Activated B cell treated with CpG ODN at 0.5 μM for 24 hours (primary cell): ENCODE measurements at regions of chr3 and their contacts with region 1.

Region 1: DNA sequence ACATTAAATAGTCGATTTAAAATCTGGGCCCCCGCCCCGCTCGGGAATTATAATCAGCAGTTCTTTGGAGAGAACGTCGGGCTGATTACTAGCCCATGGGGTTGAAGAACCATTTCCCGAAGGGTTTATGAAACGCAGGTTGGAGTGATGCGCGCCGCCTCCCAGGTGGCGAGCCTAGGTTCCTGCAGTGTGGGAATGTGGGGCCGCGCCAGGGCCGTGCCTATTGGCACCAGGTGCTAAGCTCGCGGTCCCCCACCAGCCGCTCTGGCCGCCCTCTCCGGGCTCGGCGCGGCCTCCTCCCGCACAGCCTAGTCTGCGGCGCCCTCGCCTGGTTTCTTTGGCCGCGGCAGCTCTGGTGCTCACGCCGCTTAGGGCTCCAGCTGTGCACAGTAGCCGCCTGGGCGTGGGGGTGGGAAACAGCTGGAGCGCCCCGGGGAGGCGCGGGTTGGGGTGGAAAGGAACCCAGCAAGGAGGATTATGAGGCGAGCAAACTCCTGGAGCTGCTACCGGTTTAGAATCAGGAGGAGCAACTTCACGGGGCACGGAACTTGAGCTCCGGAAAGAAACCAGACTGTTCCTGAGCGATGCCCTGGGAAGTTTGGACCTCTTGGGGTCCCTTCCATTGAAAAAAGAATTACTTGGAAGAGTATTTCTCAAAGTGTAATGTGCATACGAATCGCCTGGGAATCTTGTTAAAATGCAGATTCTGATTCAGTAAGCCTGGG is 5.6 kb upstream of the MECOM start:
- DNase-seq: peak; percentile 53
- ATAC-seq: peak; percentile 81
- H3K4me3 Mint-ChIP-seq: peak overlapping the region; percentile 54
- H3K27ac Mint-ChIP-seq: no peak overlapping the region
- H3K4me1 Mint-ChIP-seq: peaks cover 21% of the 10 kb centered on the region
- H3K27me3 Mint-ChIP-seq: peaks cover 81% of the 10 kb centered on the region
- CTCF ChIP-seq: no peak

Region 2: GRCh38 chr3:168511428-168512014 is 1157.6 kb before region 1 on chr3:
- CTCF ChIA-PET with region 1: no interaction called
- POLR2A ChIA-PET with region 1: no interaction called
- intact Hi-C with region 1: loop called (anchors 10 kb)
- DNase-seq: no peak
- ATAC-seq: no peak
- H3K4me3 Mint-ChIP-seq: no peak overlapping the region
- H3K27ac Mint-ChIP-seq: no peak overlapping the region
- H3K4me1 Mint-ChIP-seq: no peaks in the 10 kb centered on the region
- H3K27me3 Mint-ChIP-seq: no peaks in the 10 kb centered on the region
- CTCF ChIP-seq: no peak

Region 3: GRCh38 chr3:169041677-169042171 is 627.4 kb before region 1 on chr3:
- CTCF ChIA-PET with region 1: no interaction called
- POLR2A ChIA-PET with region 1: no interaction called
- intact Hi-C with region 1: loop called (anchors 2 kb)
- DNase-seq: no peak
- ATAC-seq: no peak
- H3K4me3 Mint-ChIP-seq: no peak overlapping the region
- H3K27ac Mint-ChIP-seq: no peak overlapping the region
- H3K4me1 Mint-ChIP-seq: no peaks in the 10 kb centered on the region
- H3K27me3 Mint-ChIP-seq: no peaks in the 10 kb centered on the region
- CTCF ChIP-seq: no peak

Region 4: GRCh38 chr3:169218314-169218983 is 450.7 kb before region 1 on chr3:
- CTCF ChIA-PET with region 1: interaction called, 3 read pairs
- POLR2A ChIA-PET with region 1: no interaction called
- intact Hi-C with region 1: loop called (anchors 10 kb)
- DNase-seq: no peak
- ATAC-seq: no peak
- H3K4me3 Mint-ChIP-seq: no peak overlapping the region
- H3K27ac Mint-ChIP-seq: no peak overlapping the region
- H3K4me1 Mint-ChIP-seq: no peaks in the 10 kb centered on the region
- H3K27me3 Mint-ChIP-seq: no peaks in the 10 kb centered on the region
- CTCF ChIP-seq: no peak

Region 5: GRCh38 chr3:169541528-169541927 is 127.6 kb before region 1 on chr3:
- CTCF ChIA-PET with region 1: no interaction called
- POLR2A ChIA-PET with region 1: no interaction called
- intact Hi-C with region 1: no loop called
- DNase-seq: no peak
- ATAC-seq: no peak
- H3K4me3 Mint-ChIP-seq: no peak overlapping the region
- H3K27ac Mint-ChIP-seq: no peak overlapping the region
- H3K4me1 Mint-ChIP-seq: no peaks in the 10 kb centered on the region
- H3K27me3 Mint-ChIP-seq: peaks cover 3% of the 10 kb centered on the region
- CTCF ChIP-seq: no peak

Region 6: DNA sequence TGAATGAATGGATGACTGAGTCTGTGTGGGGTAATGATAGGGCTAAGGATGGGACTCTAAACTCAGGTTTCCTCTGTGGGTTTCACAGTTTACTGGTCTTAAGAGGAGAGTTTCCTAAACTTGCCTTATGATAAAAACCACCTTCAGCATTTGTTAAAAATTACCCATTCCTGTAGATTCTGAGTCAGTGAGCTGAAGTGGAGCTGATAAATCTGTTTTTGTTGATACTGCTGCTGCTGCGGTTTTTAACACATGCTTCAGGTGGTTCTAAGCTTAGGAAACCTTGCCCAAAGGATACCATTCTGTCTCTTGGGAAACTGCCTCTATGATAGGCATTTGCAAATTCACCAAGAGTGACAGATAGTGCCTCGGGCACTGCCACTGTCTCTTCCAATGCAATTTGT is 58.2 kb before region 1 on chr3:
- CTCF ChIA-PET with region 1: no interaction called
- POLR2A ChIA-PET with region 1: no interaction called
- intact Hi-C with region 1: no loop called
- DNase-seq: no peak
- ATAC-seq: no peak
- H3K4me3 Mint-ChIP-seq: no peak overlapping the region
- H3K27ac Mint-ChIP-seq: no peak overlapping the region
- H3K4me1 Mint-ChIP-seq: no peaks in the 10 kb centered on the region
- H3K27me3 Mint-ChIP-seq: peaks cover 4% of the 10 kb centered on the region
- CTCF ChIP-seq: no peak

Region 7: DNA sequence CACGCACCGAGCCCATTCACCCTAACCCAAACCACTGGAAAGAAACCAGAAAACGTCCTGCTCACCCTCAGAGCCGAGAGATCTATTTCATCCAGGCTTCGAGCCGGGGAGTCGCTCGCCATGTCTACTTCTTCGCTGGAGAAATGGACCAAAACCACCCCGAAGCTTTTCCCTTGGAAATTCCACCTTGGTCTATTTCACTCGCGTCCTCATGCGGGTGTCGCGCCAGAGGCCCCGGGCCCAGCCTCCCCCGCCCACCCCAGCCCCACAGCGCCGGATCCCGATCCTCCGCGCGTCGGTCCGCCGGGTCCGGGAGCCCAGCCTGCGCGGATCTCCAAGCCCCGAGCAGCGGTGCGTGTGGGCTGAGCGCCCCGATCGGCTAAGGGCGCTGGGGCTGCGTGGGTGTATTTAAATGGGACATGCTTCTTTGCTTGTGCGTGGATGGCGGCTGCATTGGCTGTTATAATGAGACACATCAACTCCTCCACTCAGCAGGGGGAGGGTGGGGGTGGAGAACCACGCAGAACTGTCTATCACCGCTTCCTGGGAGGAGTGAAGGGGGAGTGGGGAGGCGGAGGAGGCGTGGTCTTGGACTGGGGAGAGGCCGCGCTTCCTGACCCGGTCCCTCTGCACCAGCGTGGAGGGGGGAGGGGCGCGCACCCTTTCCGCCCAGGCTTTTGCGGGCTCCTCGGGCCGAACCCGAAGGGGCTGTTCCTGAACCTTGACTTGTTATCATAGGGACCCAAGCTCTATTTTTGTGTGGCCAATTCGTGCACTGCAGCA is 1791.0 kb after region 1 on chr3 and contains the start of gene TNIK:
- CTCF ChIA-PET with region 1: no interaction called
- POLR2A ChIA-PET with region 1: no interaction called
- intact Hi-C with region 1: loop called (anchors 10 kb)
- DNase-seq: peak; percentile 66
- ATAC-seq: peak; percentile 90
- H3K4me3 Mint-ChIP-seq: peak within 1 kb of the TSS; percentile 93
- H3K27ac Mint-ChIP-seq: peak within 1 kb of the TSS; percentile 77
- H3K4me1 Mint-ChIP-seq: peaks cover 39% of the 10 kb centered on the region
- H3K27me3 Mint-ChIP-seq: peaks cover 9% of the 10 kb centered on the region
- CTCF ChIP-seq: no peak
- total RNA-seq, gene TNIK: 2.0 and 2.5 TPM in 2 replicates